A549 (cell line): ENCODE measurements at regions of chr19 and their contacts with region 1.

Region 1: DNA sequence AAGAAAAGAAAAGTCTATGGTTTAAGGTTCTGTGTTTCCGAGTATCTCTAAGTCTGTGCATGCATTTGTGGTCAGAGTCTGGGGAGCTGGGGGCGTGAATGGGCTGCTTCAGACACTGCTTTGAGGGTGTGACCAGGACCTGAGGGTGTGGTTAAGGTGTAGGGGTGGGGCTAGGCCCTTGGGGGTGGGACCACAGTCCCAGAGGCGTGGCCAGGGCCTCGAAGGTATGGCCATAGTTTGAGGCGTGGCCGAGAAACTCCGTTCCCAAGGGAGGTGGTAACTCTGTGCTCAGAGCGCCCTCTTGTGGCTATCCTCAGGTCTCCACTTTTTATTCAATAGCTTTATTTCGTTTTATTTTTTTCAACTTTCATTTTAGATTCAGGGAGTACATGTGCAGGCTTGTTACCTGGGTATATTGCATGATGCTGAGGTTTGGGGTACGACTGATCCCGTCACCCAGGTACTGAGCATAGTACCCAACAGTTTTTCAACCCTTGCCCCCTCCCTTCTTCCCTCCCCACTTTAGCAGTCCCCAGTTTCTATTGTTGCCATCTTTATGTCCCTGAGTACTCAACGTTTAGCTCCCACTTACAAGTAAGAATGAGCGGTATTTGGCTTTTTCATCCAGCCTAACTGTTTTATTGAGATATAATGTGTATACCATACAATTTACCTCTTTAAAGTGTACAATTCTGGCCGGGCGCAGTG is 7.0 kb upstream of the CBLC start:
- DNase-seq: peak; percentile 99
- ATAC-seq: peak; percentile 96 to 99
- H3K4me3 ChIP-seq: no peak overlapping the region
- H3K27ac ChIP-seq: peak overlapping the region; percentile 74 to 88
- H3K4me1 ChIP-seq: peaks cover 47% of the 10 kb centered on the region
- CTCF ChIP-seq: peak; percentile 99
- EP300 ChIP-seq: no peak; a peak in 1 of 5 replicates
- POLR2A ChIP-seq: no peak
- RAD21 ChIP-seq: peak; percentile 100

Region 2: DNA sequence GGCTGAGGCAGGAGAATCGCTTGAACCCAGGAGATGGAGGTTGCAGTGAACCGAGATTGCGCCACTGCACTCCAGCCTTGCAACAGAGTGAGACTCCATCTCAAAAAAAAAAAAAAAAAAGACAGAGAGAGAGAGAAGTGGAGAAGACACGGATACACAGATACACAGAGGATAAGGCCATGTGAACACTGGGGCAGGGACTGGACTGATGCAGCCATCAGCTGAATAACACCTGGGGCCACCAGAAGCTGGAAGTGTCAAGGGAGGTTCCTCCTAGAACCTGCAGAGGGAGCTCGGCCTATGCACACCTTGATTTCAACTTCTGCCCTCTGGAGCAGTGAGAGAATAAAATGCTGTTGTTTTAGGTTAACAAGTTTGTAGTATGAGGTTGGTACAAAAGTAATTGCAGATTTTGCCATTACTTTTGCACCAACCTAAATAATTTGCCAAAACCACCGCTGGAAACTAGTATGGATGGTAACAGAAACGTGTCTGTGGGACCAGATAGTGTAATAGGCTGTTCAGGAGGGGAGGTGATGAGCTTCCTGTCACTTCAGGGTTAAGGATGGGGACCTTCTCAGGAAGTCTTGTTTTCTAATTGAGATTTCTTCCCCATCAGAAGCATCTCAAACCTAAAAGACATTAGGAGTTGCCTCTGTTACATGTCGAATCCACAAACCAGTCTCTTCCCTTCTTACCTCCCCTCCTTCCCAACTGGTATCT is 193.7 kb before region 1 on chr19:
- CTCF ChIA-PET with region 1: interaction called, 14 read pairs
- POLR2A ChIA-PET with region 1: no interaction called
- DNase-seq: peak; percentile 65 to 81
- ATAC-seq: peak; percentile 91 to 94
- H3K4me3 ChIP-seq: no peak overlapping the region
- H3K27ac ChIP-seq: peak overlapping the region in 1 of 2 experiments; percentile 5; a peak in 1 of 6 replicates
- H3K4me1 ChIP-seq: no peaks in the 10 kb centered on the region
- CTCF ChIP-seq: peak; percentile 86
- EP300 ChIP-seq: no peak
- POLR2A ChIP-seq: no peak
- RAD21 ChIP-seq: peak; percentile 84 to 96

Region 3: DNA sequence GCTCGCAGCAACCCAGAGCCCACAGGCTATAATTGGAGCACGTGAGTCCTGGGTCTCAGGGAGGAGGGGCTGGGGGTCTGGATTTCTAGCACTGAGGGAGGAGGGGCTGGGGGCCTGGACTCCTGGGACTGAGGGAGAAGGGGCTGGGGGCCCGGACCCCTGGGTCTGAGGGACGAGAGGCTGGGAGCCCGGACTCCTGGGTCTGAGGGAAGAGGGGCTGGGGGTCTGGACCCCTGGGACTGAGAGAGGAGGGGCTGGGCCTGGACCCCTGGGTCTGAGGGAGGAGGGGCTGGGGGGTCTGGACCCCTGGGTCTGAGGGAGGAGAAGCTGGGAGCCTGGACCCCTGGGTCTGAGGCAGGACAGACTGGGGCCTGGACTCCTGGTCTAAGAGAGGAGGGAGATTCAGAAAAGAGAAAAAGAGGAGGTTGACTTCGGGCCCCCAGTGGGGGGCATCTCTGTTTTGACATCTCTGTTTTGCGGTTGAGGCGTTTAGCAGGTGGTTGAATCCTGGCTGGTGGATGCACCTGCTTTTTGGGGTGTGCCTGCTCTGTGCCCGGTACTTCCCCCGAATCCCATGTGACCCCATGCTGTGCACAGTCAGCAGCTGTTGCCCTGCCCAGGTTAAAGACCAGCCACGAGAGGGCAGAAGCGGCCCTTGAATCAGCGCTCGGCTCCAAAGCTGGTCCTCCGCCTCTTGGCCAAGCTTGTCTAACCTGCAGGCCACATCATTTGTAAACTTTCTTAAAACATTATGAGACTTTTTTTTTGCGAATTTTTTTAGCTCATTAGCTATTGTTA is 116.5 kb before region 1 on chr19:
- CTCF ChIA-PET with region 1: interaction called, 32 read pairs
- POLR2A ChIA-PET with region 1: no interaction called
- DNase-seq: peak; percentile 87 to 88
- ATAC-seq: peak; percentile 80 to 85
- H3K4me3 ChIP-seq: no peak overlapping the region
- H3K27ac ChIP-seq: peak overlapping the region; percentile 34 to 77; a peak in 5 of 6 replicates
- H3K4me1 ChIP-seq: peaks cover 31% of the 10 kb centered on the region
- CTCF ChIP-seq: peak; percentile 93
- EP300 ChIP-seq: no peak
- POLR2A ChIP-seq: no peak
- RAD21 ChIP-seq: peak; percentile 92 to 94

Region 4: GRCh38 chr19:44723952-44724319 is 46.8 kb before region 1 on chr19:
- CTCF ChIA-PET with region 1: interaction called, 1,899 read pairs
- POLR2A ChIA-PET with region 1: interaction called, 49 read pairs
- DNase-seq: peak; percentile 96
- ATAC-seq: peak; percentile 77 to 83
- H3K4me3 ChIP-seq: peak overlapping the region; percentile 38
- H3K27ac ChIP-seq: peak overlapping the region; percentile 97
- H3K4me1 ChIP-seq: peaks cover 87% of the 10 kb centered on the region
- CTCF ChIP-seq: peak; percentile 99
- EP300 ChIP-seq: no peak
- POLR2A ChIP-seq: peak; percentile 40; the same call in 1 of the 2 replicates
- RAD21 ChIP-seq: peak; percentile 100

Region 5: DNA sequence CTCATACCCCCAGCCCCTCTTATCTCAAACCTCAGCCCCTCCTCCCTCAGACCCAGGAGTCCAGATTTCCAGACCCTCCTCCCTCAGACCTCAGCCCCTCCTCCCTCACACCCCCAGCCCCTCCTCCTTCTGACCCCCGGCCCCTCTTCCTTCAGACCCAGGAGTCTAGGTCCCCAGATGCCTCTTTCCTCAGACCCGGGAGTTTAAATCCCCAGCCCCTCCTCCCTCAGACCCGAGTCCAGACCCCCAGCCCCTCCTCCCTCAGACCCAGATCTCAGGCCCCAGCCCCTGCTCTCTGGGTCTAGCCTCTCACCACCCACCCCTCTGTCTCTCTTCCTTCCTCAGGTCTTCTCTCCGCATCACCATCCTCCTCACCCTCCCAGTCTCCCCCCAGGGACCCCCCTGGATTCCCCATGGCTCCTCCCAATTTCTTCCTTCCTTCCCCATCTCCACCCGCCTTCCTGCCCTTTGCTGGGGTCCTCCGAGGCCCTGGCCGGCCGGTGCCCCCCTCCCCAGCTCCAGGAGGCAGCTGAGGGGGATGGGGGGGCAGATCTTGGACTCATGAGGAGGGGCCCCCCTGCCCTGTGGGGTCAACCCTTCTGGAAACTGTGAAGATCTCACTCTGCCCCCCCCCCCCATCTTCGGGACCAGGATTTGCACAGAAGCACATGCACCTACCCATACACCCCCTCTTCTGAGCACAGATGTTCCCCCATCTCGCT is 11.5 kb before region 1 on chr19:
- CTCF ChIA-PET with region 1: interaction called, 175 read pairs
- POLR2A ChIA-PET with region 1: no interaction called
- DNase-seq: no peak
- ATAC-seq: no peak
- H3K4me3 ChIP-seq: no peak overlapping the region
- H3K27ac ChIP-seq: peak overlapping the region in 1 of 2 experiments; percentile 92; a peak in 3 of 6 replicates
- H3K4me1 ChIP-seq: peaks cover 58% of the 10 kb centered on the region
- CTCF ChIP-seq: no peak
- EP300 ChIP-seq: no peak
- POLR2A ChIP-seq: no peak
- RAD21 ChIP-seq: no peak

Region 6: GRCh38 chr19:44808463-44809371 is 38.0 kb after region 1 on chr19 and contains the start of gene BCAM:
- CTCF ChIA-PET with region 1: interaction called, 77 read pairs
- POLR2A ChIA-PET with region 1: no interaction called
- DNase-seq: peak; percentile 53 to 93
- ATAC-seq: peak; percentile 52 to 72
- H3K4me3 ChIP-seq: peak within 1 kb of the TSS; percentile 69
- H3K27ac ChIP-seq: peak within 1 kb of the TSS; percentile 88 to 89
- H3K4me1 ChIP-seq: peaks cover 35% of the 10 kb centered on the region
- CTCF ChIP-seq: no peak
- EP300 ChIP-seq: no peak
- POLR2A ChIP-seq: peak; percentile 76
- RAD21 ChIP-seq: no peak
- polyA plus RNA-seq, gene BCAM: 15.2 and 18.4 TPM in 2 replicates

Region 7: GRCh38 chr19:44875666-44876451 is 105.2 kb after region 1 on chr19:
- CTCF ChIA-PET with region 1: no interaction called
- POLR2A ChIA-PET with region 1: no interaction called
- DNase-seq: no peak
- ATAC-seq: no peak
- H3K4me3 ChIP-seq: no peak overlapping the region
- H3K27ac ChIP-seq: no peak overlapping the region
- H3K4me1 ChIP-seq: no peaks in the 10 kb centered on the region
- CTCF ChIP-seq: no peak
- EP300 ChIP-seq: no peak
- POLR2A ChIP-seq: no peak
- RAD21 ChIP-seq: no peak